K562 (cell line): ENCODE measurements at regions of chr3 and their contacts with region 1.

Region 1: DNA sequence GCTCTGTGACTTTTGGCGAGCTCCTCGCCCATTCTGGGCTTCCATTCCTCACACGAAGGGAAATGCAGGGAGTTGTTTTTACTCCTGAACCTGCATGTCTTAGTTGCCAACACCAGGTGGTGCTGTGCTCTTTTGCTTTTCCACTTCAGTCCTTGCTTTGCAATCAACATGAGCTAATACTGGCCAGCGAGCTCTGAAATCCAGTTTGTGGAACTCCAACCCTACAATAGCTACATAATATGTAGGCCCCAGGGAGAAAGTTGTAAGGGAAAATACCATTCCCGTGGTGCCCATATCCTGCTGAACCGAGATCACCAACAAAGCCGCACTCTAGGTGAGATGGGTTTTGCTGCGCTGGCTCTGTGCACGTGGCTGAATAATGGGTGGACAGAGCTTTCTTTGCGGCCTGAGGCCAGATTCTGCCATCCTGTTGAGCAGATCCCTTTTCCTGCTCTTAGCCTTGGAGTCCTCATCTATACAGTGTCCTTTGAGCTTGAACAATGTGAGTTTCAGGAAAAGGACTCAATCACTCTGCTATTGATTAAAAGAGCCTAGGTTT is 25.0 kb downstream of the LSM3 start:
- DNase-seq: peak; percentile 76 to 93 (median 82)
- ATAC-seq: peak; percentile 85
- H3K4me3 ChIP-seq: no peak overlapping the region
- H3K27ac ChIP-seq: peak overlapping the region; percentile 86
- H3K4me1 ChIP-seq: peaks cover 32 to 48% of the 10 kb centered on the region in 2 experiments; a peak in 4 of 5 replicates
- H3K27me3 ChIP-seq: no peaks in the 10 kb centered on the region
- CTCF ChIP-seq: peak; percentile 89 to 98 (median 97)
- EP300 ChIP-seq: peak; percentile 40; the same call in 1 of the 2 replicates
- POLR2A ChIP-seq: no peak
- RAD21 ChIP-seq: peak; percentile 99

Region 2: DNA sequence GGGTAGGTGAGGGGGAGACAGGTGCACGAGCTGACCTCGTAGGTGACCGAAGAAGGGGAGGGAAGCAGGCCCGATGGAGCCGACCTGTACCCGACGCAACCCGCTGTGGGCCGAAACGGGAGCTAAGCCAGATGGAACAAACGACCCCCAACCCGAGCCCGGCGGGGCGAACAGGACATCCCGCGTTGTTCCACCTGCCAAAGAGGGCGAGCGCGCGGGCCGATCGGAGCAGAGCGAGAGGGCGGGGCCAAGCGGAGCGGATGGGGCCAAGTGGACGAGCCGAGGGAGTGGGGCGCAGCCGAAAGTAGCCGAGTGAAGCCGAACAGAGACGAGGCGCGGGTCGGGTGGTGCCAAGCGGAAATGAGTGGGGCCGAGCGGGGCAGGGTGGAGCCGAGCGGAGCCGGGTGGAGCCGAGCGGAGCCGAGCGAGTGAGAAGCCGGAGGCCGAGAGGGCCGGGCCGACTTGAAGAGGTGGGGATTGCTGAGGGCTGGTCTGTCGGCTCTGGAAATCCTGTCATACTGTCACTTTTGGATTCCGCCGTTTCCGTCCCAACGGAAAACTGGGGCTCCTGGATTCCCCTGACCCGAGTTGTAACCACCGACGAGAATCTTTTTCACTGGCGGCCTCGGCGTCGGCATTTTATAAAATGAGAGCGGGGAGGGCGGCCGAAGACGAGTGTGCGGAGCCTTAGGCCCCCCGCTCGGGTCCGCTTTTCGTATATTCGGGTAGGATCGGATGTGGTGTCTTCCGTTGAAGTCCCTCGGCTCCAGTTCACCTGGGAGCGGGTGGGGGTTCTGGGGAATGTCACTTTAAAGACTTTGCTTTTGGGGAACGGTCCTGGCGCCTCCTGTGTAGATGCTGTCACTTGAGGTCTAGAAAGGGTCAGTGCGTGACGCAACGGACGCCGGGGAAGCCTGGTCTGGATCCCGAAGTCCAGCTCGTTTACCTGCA is 308.2 kb before region 1 on chr3:
- CTCF ChIA-PET with region 1: no interaction called
- POLR2A ChIA-PET with region 1: no interaction called
- in situ Hi-C with region 1: no loop called
- intact Hi-C with region 1: loop called (anchors 5 kb)
- DNase-seq: peak; percentile 92 to 96 (median 94)
- ATAC-seq: peak; percentile 99
- H3K4me3 ChIP-seq: peak overlapping the region; percentile 42
- H3K27ac ChIP-seq: no peak overlapping the region; the same call in 1 of the 3 replicates
- H3K4me1 ChIP-seq: peaks cover 16 to 25% of the 10 kb centered on the region in 2 experiments
- H3K27me3 ChIP-seq: peaks cover 0 to 7% of the 10 kb centered on the region in 2 experiments; a peak in 3 of 5 replicates
- CTCF ChIP-seq: no peak
- EP300 ChIP-seq: no peak
- POLR2A ChIP-seq: peak; percentile 66
- RAD21 ChIP-seq: no peak

Region 3: DNA sequence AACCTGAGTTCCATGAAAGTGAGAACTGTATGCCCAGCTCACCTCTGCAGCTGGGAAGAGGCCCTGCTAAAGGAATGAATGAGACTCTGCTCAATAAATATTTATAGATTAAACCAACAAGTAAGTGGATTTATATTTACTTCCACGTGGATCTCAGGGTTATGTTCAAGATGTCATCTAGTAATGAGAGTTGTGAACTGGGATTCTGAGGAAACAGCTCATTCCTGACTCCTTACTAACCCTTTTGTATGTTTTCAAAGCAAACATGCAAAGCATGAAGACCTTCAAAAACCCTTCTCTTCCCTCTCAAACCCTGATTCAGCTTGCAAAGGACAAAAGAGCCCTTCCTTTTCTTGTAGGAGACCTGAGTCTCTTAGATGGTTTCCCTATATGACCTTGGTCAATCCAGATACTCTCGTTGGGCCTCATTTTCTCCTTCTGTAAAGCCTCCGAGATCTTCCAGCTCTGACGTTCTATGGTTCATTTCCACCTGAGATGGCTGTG is 28.4 kb after region 1 on chr3:
- CTCF ChIA-PET with region 1: no interaction called
- POLR2A ChIA-PET with region 1: interaction called, 23 read pairs
- in situ Hi-C with region 1: no loop called
- intact Hi-C with region 1: loop called (anchors 1 kb)
- DNase-seq: no peak
- ATAC-seq: no peak
- H3K4me3 ChIP-seq: no peak overlapping the region
- H3K27ac ChIP-seq: peak overlapping the region; percentile 90
- H3K4me1 ChIP-seq: peaks cover 38 to 66% of the 10 kb centered on the region in 2 experiments
- H3K27me3 ChIP-seq: no peaks in the 10 kb centered on the region
- CTCF ChIP-seq: no peak
- EP300 ChIP-seq: no peak
- POLR2A ChIP-seq: no peak
- RAD21 ChIP-seq: no peak

Region 4: GRCh38 chr3:14371573-14372474 is 168.2 kb after region 1 on chr3:
- CTCF ChIA-PET with region 1: interaction called, 3 read pairs
- POLR2A ChIA-PET with region 1: no interaction called
- in situ Hi-C with region 1: no loop called
- intact Hi-C with region 1: loop called (anchors 5 kb)
- DNase-seq: peak; percentile 93 to 97 (median 93)
- ATAC-seq: peak; percentile 94
- H3K4me3 ChIP-seq: no peak overlapping the region
- H3K27ac ChIP-seq: peak overlapping the region; percentile 6; the same call in 2 of the 3 replicates
- H3K4me1 ChIP-seq: peaks cover 40 to 67% of the 10 kb centered on the region in 2 experiments
- H3K27me3 ChIP-seq: no peaks in the 10 kb centered on the region
- CTCF ChIP-seq: peak; percentile 13 to 44 (median 16); a peak in 3 of 6 replicates
- EP300 ChIP-seq: peak; percentile 53
- POLR2A ChIP-seq: no peak
- RAD21 ChIP-seq: 0 out of 4 replicates have a peak, but pooled peaks of 1 of the 2 experiments have one; percentile 8

Region 5: DNA sequence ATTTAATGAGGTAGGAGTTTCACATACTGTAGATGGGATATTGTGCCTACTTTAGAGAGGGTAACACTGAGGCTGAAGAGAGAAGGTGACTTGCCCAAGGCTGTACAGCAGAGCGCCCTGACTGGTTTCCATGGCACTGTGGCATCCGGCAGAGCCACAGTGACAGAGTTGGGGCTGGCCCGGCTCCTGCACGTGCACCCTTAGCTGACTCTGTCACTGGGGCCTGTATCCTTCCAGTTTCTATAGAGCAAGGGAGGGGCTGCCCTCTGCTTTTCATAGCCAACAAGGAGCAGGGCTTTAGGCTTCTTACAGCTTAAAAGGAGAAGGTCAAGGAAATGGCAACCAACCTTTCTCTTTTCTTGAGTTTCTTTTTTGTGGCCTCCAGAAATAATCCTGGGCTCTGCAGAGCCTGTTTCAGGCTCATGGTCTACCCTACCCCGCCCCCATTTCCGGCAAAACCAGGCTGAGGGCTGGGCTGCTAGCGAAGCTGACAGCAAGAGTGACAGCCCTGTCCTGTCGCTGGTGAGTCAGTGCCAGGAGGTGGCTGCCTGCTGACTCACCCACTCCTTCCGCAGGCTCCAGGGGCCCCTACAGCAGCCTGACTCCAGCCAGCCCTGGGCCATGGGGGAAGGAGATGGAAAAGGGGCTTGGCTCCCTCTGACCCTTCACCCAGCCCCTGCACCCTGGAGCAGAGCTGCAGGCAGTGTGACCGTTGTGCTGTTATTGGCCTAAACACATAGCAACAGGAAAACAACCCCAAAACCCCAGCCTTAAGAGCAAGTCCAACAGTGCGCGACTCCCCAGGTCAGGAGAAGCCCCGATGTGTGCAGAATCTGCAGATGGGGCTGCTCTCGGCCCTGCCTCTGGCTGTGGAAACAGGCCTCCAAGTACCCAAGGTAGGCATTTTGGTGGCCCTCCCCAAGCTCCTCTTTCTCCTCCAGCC is 228.6 kb after region 1 on chr3:
- CTCF ChIA-PET with region 1: no interaction called
- POLR2A ChIA-PET with region 1: interaction called, 3 read pairs
- in situ Hi-C with region 1: no loop called
- intact Hi-C with region 1: loop called (anchors 10 kb)
- DNase-seq: peak; percentile 94 to 97 (median 96)
- ATAC-seq: peak; percentile 97
- H3K4me3 ChIP-seq: peak overlapping the region; percentile 7; the same call in 1 of the 2 replicates
- H3K27ac ChIP-seq: peak overlapping the region; percentile 80
- H3K4me1 ChIP-seq: peaks cover 47 to 63% of the 10 kb centered on the region in 2 experiments
- H3K27me3 ChIP-seq: no peaks in the 10 kb centered on the region
- CTCF ChIP-seq: no peak
- EP300 ChIP-seq: peak; percentile 78; the same call in 1 of the 2 replicates
- POLR2A ChIP-seq: peak; percentile 14; the same call in 1 of the 2 replicates
- RAD21 ChIP-seq: peak in 1 of 2 experiments; percentile 14; a peak in 2 of 4 replicates

Region 6: DNA sequence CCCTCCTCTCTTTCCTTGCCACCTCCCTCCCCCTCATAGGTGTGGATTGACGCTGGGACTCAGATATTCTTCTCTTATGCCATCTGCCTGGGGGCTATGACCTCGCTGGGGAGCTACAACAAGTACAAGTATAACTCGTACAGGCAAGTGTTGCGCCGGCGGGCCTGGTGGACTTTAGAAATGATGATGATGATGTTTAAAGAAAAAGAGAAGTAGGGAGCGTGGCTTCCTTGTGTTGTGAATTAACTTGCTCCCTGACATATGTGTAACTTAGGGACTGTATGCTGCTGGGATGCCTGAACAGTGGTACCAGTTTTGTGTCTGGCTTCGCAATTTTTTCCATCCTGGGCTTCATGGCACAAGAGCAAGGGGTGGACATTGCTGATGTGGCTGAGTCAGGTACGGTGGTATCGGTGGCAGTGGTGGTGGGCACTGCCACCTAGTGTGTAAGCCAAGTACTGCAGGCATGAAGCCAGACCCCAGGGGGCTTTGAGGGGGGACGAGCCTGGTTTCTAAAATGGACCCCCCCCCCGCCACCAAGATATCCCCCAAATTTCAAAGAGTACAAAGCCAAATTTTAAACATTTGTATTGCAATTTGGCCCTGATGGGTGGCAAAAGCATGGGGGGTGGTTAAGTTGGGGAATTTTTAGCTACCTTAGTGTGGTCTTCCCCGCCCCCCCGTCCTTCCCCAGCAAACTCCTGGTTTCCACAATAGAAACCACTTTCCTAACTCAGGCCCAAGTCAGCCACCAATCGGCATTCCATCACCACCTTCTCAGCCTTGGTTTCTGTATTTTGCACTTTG is 264.4 kb after region 1 on chr3:
- CTCF ChIA-PET with region 1: interaction called, 55 read pairs
- POLR2A ChIA-PET with region 1: interaction called, 5 read pairs
- in situ Hi-C with region 1: loop called (anchors 5 kb)
- intact Hi-C with region 1: loop called (anchors 1 kb)
- DNase-seq: peak; percentile 47 to 89 (median 84)
- ATAC-seq: peak; percentile 82
- H3K4me3 ChIP-seq: no peak overlapping the region
- H3K27ac ChIP-seq: no peak overlapping the region
- H3K4me1 ChIP-seq: peaks cover 0 to 4% of the 10 kb centered on the region in 2 experiments; a peak in 1 of 5 replicates
- H3K27me3 ChIP-seq: no peaks in the 10 kb centered on the region; a peak in 1 of 5 replicates
- CTCF ChIP-seq: peak; percentile 73 to 87 (median 77)
- EP300 ChIP-seq: no peak
- POLR2A ChIP-seq: no peak
- RAD21 ChIP-seq: peak; percentile 85 to 90

Region 7: DNA sequence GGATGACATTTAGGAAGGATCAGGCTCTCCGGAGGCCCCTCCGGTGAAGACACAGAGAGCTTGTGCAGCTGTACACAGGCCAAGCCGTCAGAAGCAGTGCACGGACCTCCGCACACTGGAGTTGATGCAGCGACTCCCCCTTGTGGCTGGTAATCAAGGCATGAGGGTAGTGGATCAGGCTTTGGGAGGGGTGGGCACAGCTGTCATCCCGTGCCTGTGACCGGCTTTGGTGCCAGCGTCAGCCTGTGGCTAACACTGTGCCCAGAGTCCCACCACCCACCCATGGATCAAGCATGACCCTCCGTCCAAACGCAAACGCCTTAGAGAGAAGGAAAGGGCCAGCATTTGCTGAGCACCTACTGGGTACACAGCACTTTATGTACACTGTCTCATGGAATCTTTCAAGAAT is 344.7 kb after region 1 on chr3:
- CTCF ChIA-PET with region 1: no interaction called
- POLR2A ChIA-PET with region 1: interaction called, 4 read pairs
- in situ Hi-C with region 1: no loop called
- intact Hi-C with region 1: loop called (anchors 1 kb)
- DNase-seq: peak; percentile 74 to 78 (median 77)
- ATAC-seq: peak; percentile 96
- H3K4me3 ChIP-seq: no peak overlapping the region
- H3K27ac ChIP-seq: no peak overlapping the region
- H3K4me1 ChIP-seq: peaks cover 0 to 16% of the 10 kb centered on the region in 2 experiments; a peak in 2 of 5 replicates
- H3K27me3 ChIP-seq: peaks cover 12 to 74% of the 10 kb centered on the region in 2 experiments; a peak in 4 of 5 replicates
- CTCF ChIP-seq: peak; percentile 85 to 90 (median 90)
- EP300 ChIP-seq: no peak
- POLR2A ChIP-seq: no peak
- RAD21 ChIP-seq: peak; percentile 69 to 91